Body of pancreas (tissue), 4 donors: ENCODE measurements at regions of chr16 and their contacts with region 1.

Region 1: DNA sequence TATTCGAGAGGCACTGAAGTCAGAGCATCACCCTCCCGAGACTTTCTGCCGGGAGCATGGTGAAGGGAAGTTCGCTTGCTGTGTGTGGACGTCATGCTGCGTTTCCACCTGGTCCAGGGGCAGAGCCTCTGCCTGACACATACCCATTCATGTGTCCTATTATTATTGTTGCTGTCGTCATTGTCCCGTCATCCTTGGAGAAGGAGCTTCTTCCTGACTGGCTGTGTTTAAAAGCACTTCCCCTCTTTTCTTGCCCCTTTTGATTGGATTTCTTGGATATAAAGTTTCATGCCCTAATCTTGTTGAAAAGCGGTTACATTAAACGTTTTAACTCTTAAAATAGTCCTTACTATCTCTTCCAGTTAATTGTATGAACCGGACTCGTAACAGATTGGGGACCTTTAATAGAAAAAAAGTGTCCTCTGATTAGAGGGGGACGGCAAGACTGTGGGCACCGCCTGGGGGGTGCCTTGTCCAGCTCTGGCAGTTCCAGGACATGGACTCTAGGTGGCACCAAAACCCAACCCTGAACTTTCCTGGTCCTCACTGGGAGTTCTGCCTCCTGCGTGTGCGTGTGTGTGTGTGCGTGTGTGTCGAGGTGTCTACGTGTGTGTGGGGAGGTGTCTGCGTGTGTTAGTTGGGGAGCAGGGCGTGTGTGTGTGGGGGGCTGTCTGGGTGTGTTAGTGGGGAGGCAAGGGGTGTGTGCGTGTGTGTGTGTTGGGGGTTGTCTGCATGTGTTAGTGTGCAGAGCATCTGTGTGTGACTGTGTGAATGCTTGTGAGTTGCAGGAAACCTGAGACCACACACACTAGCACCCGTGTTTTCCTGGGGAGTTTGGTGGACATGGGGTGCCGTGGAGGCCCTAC is 133.3 kb upstream of the CIBAR2 start:
- DNase-seq: peak; percentile 56 to 66 (median 62)
- ATAC-seq: peak; percentile 77
- H3K4me3 ChIP-seq: no peak overlapping the region
- H3K27ac ChIP-seq: no peak overlapping the region
- H3K4me1 ChIP-seq: peaks cover 17% of the 10 kb centered on the region
- H3K27me3 ChIP-seq: no peaks in the 10 kb centered on the region
- CTCF ChIP-seq: peak; percentile 71 to 91 (median 84)
- POLR2A ChIP-seq: no peak

Region 2: DNA sequence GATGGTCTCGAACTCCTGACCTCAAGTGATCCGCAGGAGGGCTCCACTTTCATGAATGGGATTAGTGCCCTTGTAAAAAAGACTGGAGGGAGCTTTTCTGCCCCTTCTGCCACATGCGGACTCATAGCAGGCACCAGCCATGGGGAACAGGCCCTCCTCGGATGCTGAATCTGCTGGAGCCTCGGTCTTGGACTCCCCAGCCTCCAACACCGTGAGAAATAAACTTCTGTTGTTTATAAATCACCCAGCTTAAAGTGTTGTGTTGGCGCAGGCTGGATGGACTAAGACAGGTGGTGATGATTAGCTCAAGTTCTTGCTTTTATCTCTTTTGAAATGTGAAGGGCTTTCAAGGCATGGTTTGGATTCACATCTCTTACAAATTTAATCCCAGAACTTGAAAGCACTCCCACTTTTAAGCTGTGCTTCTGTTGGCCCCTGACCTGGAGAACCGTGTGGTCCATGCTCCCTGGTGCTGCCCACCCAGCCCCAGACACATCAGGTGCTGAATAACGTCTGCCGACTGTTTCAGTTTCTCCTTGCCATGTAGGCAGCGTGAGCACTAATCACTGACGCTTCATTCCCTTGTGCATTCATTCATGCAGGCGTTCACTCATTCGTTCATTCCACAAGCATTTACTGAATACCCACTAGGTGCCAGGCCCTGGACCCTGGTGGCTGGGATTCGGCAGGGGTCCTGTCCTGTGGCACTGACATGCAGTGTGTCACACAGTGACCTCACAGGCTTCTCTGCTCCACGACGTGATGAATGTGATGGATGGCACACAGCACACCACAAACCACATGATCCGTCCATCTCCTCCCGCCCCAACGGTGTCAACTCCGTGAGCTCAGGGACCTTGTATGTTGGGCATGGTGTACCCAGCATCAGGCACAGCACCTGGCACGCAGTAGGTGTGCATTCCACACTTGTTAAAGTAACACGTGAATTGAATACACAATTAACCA is 142.1 kb before region 1 on chr16:
- intact Hi-C with region 1: no loop called
- DNase-seq: no peak
- ATAC-seq: no peak
- H3K4me3 ChIP-seq: no peak overlapping the region
- H3K27ac ChIP-seq: no peak overlapping the region
- H3K4me1 ChIP-seq: no peaks in the 10 kb centered on the region
- H3K27me3 ChIP-seq: no peaks in the 10 kb centered on the region
- CTCF ChIP-seq: no peak
- POLR2A ChIP-seq: no peak

Region 3: DNA sequence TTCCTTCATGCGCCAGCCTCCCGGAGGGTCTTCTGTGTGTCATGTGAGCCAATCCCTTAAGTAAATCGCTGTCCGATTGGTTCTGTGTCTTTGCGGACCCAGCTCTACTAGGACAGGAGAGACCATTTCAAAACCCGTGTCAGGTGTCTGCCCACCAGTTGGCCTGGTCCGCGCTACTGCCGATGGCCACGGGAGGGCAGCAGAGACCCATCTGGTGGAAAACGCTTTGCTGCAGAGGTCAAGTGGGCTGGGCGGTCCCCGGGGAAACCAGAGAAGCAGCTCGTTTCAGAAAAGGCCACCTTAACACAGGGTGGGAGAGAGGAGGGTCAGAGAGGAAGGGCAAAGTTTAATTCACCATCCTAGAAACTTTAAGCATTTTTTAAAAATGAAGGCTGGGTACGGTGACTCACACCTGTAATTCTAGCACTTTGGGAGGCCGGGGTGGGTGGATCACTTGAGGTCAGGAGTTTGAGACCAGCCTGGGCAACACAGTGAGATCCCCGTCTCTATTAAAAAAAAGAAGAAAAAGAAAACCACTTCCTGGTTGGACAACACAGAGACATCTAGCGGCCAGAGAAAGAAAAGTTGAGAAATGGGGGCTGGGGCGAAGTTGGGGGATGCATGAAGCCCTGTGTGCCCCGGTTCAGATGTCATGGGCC is 130.5 kb before region 1 on chr16:
- intact Hi-C with region 1: loop called (anchors 10 kb)
- DNase-seq: peak; percentile 89 to 93 (median 90)
- ATAC-seq: peak; percentile 93
- H3K4me3 ChIP-seq: no peak overlapping the region
- H3K27ac ChIP-seq: peak overlapping the region in 3 of 4 donors; percentile 5 to 68 (median 36)
- H3K4me1 ChIP-seq: peaks cover 9% of the 10 kb centered on the region
- H3K27me3 ChIP-seq: no peaks in the 10 kb centered on the region
- CTCF ChIP-seq: peak; percentile 96 to 98 (median 97)
- POLR2A ChIP-seq: no peak